ENCODE measurements at regions of chr16 and their contacts with region 1.

Region 1: GRCh38 chr16:12062343-12063005 is 85.9 kb downstream of the SNX29 start:
- DNase-seq: peak; percentile 49
- H3K4me3 ChIP-seq: no peak overlapping the region
- H3K27ac ChIP-seq: peak overlapping the region; percentile 28
- H3K4me1 ChIP-seq: no peaks in the 10 kb centered on the region
- H3K27me3 ChIP-seq: no peaks in the 10 kb centered on the region
- CTCF ChIP-seq: no peak

Region 2: GRCh38 chr16:11972128-11972527 is 90.3 kb before region 1 on chr16:
- intact Hi-C with region 1: loop called (anchors 5 kb)
- DNase-seq: peak; percentile 22
- H3K4me3 ChIP-seq: no peak overlapping the region
- H3K27ac ChIP-seq: no peak overlapping the region
- H3K4me1 ChIP-seq: peaks cover 7% of the 10 kb centered on the region
- H3K27me3 ChIP-seq: no peaks in the 10 kb centered on the region
- CTCF ChIP-seq: peak; percentile 21

Region 3: GRCh38 chr16:12348733-12349704 is 286.5 kb after region 1 on chr16:
- intact Hi-C with region 1: no loop called
- DNase-seq: no peak
- H3K4me3 ChIP-seq: no peak overlapping the region
- H3K27ac ChIP-seq: no peak overlapping the region
- H3K4me1 ChIP-seq: no peaks in the 10 kb centered on the region
- H3K27me3 ChIP-seq: no peaks in the 10 kb centered on the region
- CTCF ChIP-seq: no peak

Measured in colonic mucosa (tissue), 4 donors.